T-cell (primary cell): ENCODE measurements at regions of chr17 and their contacts with region 1.

Region 1: DNA sequence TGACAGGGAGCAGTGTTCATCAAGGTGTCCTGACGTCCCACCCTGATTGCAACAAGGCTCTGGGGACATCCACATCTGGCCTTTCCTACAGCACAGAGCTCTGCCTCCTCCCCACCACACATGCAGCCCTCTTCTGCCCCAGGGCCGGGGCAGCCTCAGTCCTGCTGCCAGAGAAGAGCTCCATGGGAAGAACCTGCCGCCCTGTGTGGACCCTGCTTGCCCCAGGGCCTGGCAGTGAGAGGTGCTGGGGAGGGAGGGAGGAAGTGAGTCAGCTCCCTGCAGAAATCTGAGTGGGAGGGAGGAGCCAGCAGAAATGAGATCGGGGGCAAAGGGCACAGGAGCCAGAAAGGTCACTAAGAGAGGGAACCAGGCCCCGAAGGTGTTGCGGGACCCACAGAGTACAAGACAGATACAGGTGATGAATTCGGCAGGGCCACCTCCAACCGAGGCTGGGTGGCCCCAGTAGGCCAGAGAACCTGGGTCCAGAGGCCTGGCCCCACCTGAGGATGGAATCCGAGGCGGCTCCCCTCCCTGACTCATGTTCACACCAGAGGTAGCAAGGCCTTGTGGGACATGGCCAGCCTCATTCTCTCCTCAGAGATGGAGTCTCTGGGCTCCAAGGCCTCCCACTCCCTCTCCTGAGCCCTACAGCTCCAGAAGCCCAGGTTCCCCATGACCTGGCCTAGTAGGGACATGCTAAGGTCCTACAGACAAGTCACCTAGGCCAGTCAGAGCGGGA is 24.8 kb downstream of the MYO18A start:
- DNase-seq: peak in 10 of 35 experiments; percentile 9 to 51 (median 32)
- ATAC-seq: peak; percentile 70 to 94 (median 87)
- H3K4me3 ChIP-seq: peak overlapping the region in 1 of 2 donors; percentile 10
- H3K4me3 Mint-ChIP-seq: peak overlapping the region; percentile 17 to 54 (median 47)
- H3K27ac ChIP-seq: peak overlapping the region; percentile 69
- H3K27ac Mint-ChIP-seq: peak overlapping the region; percentile 82 to 86
- H3K4me1 ChIP-seq: peaks cover 0 to 33% of the 10 kb centered on the region in 2 experiments
- H3K4me1 Mint-ChIP-seq: peaks cover 23 to 45% (median 28%) of the 10 kb centered on the region in 3 donors
- H3K27me3 ChIP-seq: no peaks in the 10 kb centered on the region
- H3K27me3 Mint-ChIP-seq: no peaks in the 10 kb centered on the region

Region 2: DNA sequence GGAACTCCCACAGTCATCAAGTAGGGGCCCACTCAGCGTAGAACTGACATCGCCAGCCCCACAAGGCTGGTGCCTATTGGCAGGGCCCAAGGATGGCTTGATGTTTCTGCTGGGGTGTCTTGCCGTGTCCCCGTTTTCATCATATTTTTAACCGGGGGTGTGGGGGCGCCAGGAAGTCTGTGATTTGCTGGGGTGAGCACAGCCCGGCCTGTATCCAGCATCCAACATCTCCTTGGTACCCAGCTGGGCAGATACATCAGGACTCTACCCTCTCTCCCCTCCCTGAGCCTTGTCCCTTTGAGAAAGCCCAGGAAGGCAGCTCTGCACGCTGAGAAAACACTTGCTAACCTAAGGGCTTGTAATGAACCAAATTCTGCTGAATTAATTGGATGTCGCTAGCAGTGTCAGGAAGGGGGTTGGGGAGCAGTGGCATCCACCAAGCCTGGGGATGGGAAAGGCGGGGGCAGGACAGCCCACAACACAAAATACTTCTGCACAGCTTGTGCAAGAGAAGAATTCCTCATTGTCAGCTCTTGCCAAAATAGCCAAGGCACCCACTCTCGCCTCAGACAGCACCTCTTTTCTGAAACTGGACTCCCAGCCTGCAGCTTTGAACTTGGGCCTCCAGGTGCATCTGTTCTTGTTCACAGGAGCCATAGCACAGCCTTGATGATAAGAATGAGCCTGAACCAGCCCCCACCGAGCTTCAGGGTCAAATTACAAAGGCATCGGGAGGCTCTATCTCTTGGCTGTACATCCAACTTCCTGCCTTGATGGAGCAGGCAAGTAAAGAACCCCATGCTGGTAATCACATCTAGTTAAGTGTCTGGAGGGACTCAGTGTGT is 1198.6 kb before region 1 on chr17:
- CTCF ChIA-PET with region 1: no interaction called
- POLR2A ChIA-PET with region 1: no interaction called
- DNase-seq: no peak
- ATAC-seq: no peak
- H3K4me3 ChIP-seq: no peak overlapping the region
- H3K4me3 Mint-ChIP-seq: no peak overlapping the region
- H3K27ac ChIP-seq: no peak overlapping the region
- H3K27ac Mint-ChIP-seq: no peak overlapping the region
- H3K4me1 ChIP-seq: no peaks in the 10 kb centered on the region
- H3K4me1 Mint-ChIP-seq: no peaks in the 10 kb centered on the region
- H3K27me3 ChIP-seq: peaks cover 0 to 26% of the 10 kb centered on the region in 2 experiments
- H3K27me3 Mint-ChIP-seq: peaks cover 6 to 11% of the 10 kb centered on the region in 2 donors

Region 3: DNA sequence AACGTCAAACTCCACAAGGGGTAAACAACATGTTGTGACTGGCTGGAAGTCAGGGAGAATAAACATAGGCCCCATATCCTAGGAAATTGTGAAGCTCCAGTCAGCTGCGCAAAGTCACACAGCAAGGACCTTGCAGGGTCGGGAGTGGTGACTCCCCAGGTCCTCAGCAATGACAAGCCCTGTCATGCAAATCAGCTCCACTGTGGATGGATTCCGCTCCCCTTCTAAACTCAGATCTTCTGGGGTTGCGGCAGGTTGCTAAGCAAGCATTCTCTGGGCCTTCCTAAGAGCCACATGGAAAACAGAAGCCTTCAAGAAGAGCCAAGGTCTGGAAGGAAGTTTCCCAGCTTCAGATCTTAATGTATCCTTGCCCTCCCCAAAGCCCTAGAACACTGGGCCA is 53.7 kb after region 1 on chr17:
- CTCF ChIA-PET with region 1: no interaction called
- POLR2A ChIA-PET with region 1: no interaction called
- DNase-seq: no peak
- ATAC-seq: no peak
- H3K4me3 ChIP-seq: no peak overlapping the region
- H3K4me3 Mint-ChIP-seq: no peak overlapping the region
- H3K27ac ChIP-seq: no peak overlapping the region
- H3K27ac Mint-ChIP-seq: no peak overlapping the region
- H3K4me1 ChIP-seq: no peaks in the 10 kb centered on the region
- H3K4me1 Mint-ChIP-seq: no peaks in the 10 kb centered on the region
- H3K27me3 ChIP-seq: peaks cover 0 to 13% of the 10 kb centered on the region in 2 experiments
- H3K27me3 Mint-ChIP-seq: peaks cover 4 to 9% of the 10 kb centered on the region in 2 donors

Region 4: GRCh38 chr17:29219378-29220047 is 64.1 kb after region 1 on chr17:
- CTCF ChIA-PET with region 1: interaction called in 1 of 2 experiments, 11 read pairs
- POLR2A ChIA-PET with region 1: no interaction called
- DNase-seq: peak; percentile 21 to 84 (median 54)
- ATAC-seq: peak; percentile 78 to 97 (median 90)
- H3K4me3 ChIP-seq: no peak overlapping the region
- H3K4me3 Mint-ChIP-seq: no peak overlapping the region
- H3K27ac ChIP-seq: no peak overlapping the region
- H3K27ac Mint-ChIP-seq: no peak overlapping the region
- H3K4me1 ChIP-seq: peaks cover 0 to 4% of the 10 kb centered on the region in 2 experiments
- H3K4me1 Mint-ChIP-seq: peaks cover 6 to 7% (median 6%) of the 10 kb centered on the region in 3 donors
- H3K27me3 ChIP-seq: peaks cover 0 to 7% of the 10 kb centered on the region in 2 experiments
- H3K27me3 Mint-ChIP-seq: no peaks in the 10 kb centered on the region